ENCODE measurements at regions of chr16 and their contacts with region 1.

Region 1: DNA sequence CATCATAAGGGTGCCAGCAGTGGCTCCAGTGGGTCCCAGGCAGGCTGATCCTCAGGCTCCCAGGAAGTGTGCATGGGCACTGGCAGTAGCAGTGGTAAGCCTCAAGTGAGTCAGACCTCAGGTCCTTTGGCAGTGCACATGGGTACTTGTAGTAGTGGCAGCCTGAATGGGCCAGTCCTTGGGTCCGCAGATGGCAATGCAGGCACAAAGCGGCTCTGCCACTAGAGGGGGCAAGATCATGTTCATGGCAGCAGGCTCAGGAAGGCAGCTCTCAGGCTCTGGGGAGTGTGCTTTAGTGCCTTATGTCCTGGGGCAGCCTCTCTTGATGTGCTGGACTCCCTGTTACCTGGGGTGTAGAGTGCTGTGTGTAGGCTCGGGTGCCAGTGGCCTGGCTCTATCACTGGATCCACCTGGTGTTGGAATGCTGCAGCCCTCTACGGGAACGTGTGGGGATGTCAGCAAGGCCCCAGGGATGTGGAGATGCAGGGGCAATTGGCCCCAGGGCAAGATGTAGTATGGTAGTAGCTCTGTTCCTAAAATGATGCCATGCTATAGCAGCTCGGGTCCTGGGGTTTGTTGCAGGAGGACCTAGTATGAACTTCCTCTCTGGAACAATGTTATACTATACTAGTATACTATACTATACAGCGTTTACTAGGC is 11.0 kb downstream of the ACSM3 start:
- DNase-seq: peak; percentile 73
- ATAC-seq: peak; percentile 98
- H3K4me3 ChIP-seq: no peak overlapping the region
- H3K27ac ChIP-seq: no peak overlapping the region
- H3K4me1 ChIP-seq: no peaks in the 10 kb centered on the region
- H3K27me3 ChIP-seq: peaks cover 3% of the 10 kb centered on the region; the same call in 1 of the 2 replicates
- CTCF ChIP-seq: peak; percentile 90

Region 2: GRCh38 chr16:20662880-20663279 is 112.0 kb before region 1 on chr16:
- CTCF ChIA-PET with region 1: no interaction called
- POLR2A ChIA-PET with region 1: interaction called, 13 read pairs
- in situ Hi-C with region 1: no loop called
- intact Hi-C with region 1: no loop called
- DNase-seq: no peak
- ATAC-seq: no peak
- H3K4me3 ChIP-seq: no peak overlapping the region
- H3K27ac ChIP-seq: no peak overlapping the region
- H3K4me1 ChIP-seq: no peaks in the 10 kb centered on the region
- H3K27me3 ChIP-seq: 0 out of 2 replicates have a peak, but pooled peaks cover 5% of the 10 kb centered on the region
- CTCF ChIP-seq: no peak

Region 3: GRCh38 chr16:21097151-21097550 is 322.3 kb after region 1 on chr16:
- CTCF ChIA-PET with region 1: no interaction called
- POLR2A ChIA-PET with region 1: no interaction called
- in situ Hi-C with region 1: no loop called
- intact Hi-C with region 1: no loop called
- DNase-seq: no peak
- ATAC-seq: no peak
- H3K4me3 ChIP-seq: no peak overlapping the region
- H3K27ac ChIP-seq: no peak overlapping the region
- H3K4me1 ChIP-seq: no peaks in the 10 kb centered on the region
- H3K27me3 ChIP-seq: 0 out of 2 replicates have a peak, but pooled peaks cover 2% of the 10 kb centered on the region
- CTCF ChIP-seq: no peak

Measured in Panc1 (cell line).